K562 (cell line): ENCODE measurements at regions of chr17 and their contacts with region 1.

Region 1: GRCh38 chr17:77280980-77281903 is 140.5 kb downstream of the SEC14L1 start:
- DNase-seq: peak; percentile 72 to 96 (median 94)
- ATAC-seq: peak; percentile 85
- H3K4me3 ChIP-seq: peak overlapping the region; percentile 51
- H3K27ac ChIP-seq: no peak overlapping the region; the same call in 2 of the 3 replicates
- H3K4me1 ChIP-seq: peaks cover 32 to 43% of the 10 kb centered on the region in 2 experiments
- H3K27me3 ChIP-seq: peaks cover 0 to 2% of the 10 kb centered on the region in 2 experiments; a peak in 1 of 5 replicates
- CTCF ChIP-seq: peak in 2 of 3 experiments; percentile 44 to 62; a peak in 3 of 6 replicates
- EP300 ChIP-seq: no peak
- POLR2A ChIP-seq: no peak
- RAD21 ChIP-seq: peak in 1 of 2 experiments; percentile 39; a peak in 2 of 4 replicates

Region 2: GRCh38 chr17:77178563-77178962 is 102.7 kb before region 1 on chr17:
- CTCF ChIA-PET with region 1: no interaction called
- POLR2A ChIA-PET with region 1: no interaction called
- in situ Hi-C with region 1: no loop called
- intact Hi-C with region 1: no loop called
- DNase-seq: no peak
- ATAC-seq: no peak
- H3K4me3 ChIP-seq: no peak overlapping the region
- H3K27ac ChIP-seq: no peak overlapping the region
- H3K4me1 ChIP-seq: peaks cover 9 to 19% of the 10 kb centered on the region in 2 experiments
- H3K27me3 ChIP-seq: no peaks in the 10 kb centered on the region
- CTCF ChIP-seq: no peak
- EP300 ChIP-seq: no peak
- POLR2A ChIP-seq: no peak
- RAD21 ChIP-seq: no peak

Region 3: DNA sequence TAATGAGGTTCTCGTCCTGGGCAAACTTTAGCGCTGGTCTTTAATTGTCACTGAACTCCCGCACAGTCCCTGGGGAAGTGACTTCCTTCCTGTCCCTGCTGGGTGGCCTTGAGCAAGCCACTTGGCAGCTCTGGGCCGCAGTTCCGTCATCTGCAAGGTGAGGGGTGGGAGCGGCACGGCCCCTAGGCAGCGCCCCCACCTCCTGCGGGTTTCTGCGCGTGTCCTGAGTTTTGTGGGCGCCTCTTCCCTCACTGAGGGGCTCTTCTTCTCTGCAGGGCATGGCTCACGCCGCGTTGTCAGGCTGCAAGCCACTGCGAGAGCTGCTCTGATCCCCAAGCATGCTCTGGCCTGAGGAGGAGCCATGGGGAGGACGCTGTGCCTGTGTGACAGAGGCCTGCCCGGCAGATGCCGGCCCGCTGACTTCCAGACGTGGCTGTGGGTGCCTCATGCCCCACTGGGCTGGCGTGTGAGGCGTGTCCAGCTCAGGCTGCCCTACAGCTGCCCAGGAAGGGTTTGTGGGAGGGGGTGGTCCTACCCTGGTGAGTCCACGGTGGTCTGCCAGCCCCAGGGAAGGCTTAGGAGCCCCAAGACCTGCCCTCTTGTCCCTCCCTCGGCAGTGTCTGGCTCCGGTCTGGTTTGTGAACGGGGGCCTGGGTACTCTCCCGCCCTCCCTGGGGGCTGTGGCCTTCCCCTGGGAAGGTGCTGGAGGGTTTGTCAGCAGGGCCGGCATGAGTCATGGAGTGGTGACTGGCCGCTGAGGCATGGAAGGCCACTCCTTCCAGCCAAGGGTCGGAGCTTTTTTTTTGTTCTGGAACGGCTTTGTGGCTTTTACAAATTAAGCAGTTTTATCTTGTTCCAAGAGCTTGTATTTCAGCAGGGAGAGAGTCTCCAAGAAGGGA is 41.5 kb after region 1 on chr17:
- CTCF ChIA-PET with region 1: no interaction called
- POLR2A ChIA-PET with region 1: no interaction called
- in situ Hi-C with region 1: no loop called
- intact Hi-C with region 1: loop called (anchors 2 kb)
- DNase-seq: peak; percentile 62 to 87 (median 71)
- ATAC-seq: peak; percentile 68
- H3K4me3 ChIP-seq: peak overlapping the region; percentile 65
- H3K27ac ChIP-seq: peak overlapping the region; percentile 84
- H3K4me1 ChIP-seq: peaks cover 44 to 79% of the 10 kb centered on the region in 2 experiments
- H3K27me3 ChIP-seq: no peaks in the 10 kb centered on the region
- CTCF ChIP-seq: no peak
- EP300 ChIP-seq: peak; percentile 14; the same call in 1 of the 2 replicates
- POLR2A ChIP-seq: peak; percentile 58; the same call in 1 of the 2 replicates
- RAD21 ChIP-seq: no peak